Activated B cell treated with CpG ODN at 0.5 μM for 24 hours (primary cell): ENCODE measurements at regions of chr5 and their contacts with region 1.

Region 1: DNA sequence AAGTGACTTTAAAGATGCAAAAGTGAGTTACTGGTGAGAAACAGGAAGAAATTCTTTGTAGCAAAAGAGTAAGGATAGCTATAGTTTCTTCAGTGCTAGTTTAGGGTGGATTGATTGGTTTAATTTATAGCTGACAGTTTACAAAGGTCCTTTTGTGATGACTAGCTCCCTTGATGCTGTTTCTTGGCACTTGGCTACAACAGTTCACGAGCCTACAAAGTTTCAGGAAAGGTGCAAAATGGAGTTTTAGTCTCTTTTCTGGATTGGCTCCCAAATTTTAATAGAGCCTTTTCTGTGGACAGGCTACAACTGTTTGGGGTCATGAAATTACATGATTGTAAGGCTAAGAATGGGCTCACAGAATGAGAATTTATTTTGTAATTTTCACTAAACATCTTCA is 40.9 kb upstream of the BNIP1 start:
- DNase-seq: no peak
- ATAC-seq: no peak
- H3K4me3 Mint-ChIP-seq: no peak overlapping the region
- H3K27ac Mint-ChIP-seq: no peak overlapping the region
- H3K4me1 Mint-ChIP-seq: peaks cover 12% of the 10 kb centered on the region
- H3K27me3 Mint-ChIP-seq: no peaks in the 10 kb centered on the region
- CTCF ChIP-seq: no peak

Region 2: DNA sequence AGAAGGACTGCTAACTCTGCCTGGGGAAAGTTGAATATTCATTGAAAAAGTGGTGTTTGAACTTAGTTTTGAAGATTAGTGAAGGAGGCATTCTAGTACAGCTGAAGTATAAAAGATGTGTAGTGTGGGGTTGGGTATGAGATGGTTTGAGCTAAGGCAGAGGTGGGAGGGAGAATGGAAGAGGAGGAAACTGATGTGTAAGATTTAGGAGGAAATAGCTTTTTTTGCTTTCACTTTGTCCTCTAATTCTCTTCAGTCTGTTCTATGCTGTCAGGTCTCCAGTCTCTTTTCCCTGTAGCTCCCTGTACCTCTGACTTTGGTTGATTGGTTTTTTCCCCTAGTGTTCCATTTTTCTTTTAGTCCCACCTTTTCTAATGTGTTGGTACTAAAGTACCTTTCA is 38.3 kb before region 1 on chr5:
- CTCF ChIA-PET with region 1: no interaction called
- POLR2A ChIA-PET with region 1: no interaction called
- intact Hi-C with region 1: loop called (anchors 5 kb)
- DNase-seq: no peak
- ATAC-seq: peak; percentile 45
- H3K4me3 Mint-ChIP-seq: peak overlapping the region; percentile 6
- H3K27ac Mint-ChIP-seq: peak overlapping the region; percentile 76
- H3K4me1 Mint-ChIP-seq: peaks cover 74% of the 10 kb centered on the region
- H3K27me3 Mint-ChIP-seq: no peaks in the 10 kb centered on the region
- CTCF ChIP-seq: no peak

Region 3: DNA sequence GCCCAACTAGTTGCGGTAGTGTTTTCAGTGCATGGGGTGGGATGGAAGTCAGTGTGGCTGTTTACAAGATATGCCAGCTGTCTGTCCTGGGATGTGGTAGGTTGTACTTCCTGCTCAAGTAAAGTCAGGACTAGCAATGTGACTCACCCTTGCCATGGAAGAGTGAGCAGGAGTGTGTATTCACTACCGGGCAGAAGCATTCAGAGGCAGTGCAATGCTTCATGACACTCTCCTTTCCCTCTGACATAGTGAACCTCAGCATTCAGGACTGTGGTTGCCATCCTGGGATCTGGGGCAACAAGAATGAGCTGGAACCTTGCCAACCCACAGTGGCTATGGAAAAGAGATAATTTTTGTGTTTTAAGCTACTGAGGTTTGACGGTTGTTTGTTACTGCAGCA is 444.2 kb after region 1 on chr5:
- CTCF ChIA-PET with region 1: no interaction called
- POLR2A ChIA-PET with region 1: no interaction called
- intact Hi-C with region 1: no loop called
- DNase-seq: no peak
- ATAC-seq: no peak
- H3K4me3 Mint-ChIP-seq: no peak overlapping the region
- H3K27ac Mint-ChIP-seq: no peak overlapping the region
- H3K4me1 Mint-ChIP-seq: no peaks in the 10 kb centered on the region
- H3K27me3 Mint-ChIP-seq: peaks cover 2% of the 10 kb centered on the region
- CTCF ChIP-seq: no peak